ENCODE measurements at regions of chr19 and their contacts with region 1.

Region 1: GRCh38 chr19:52570000-52570861 is at the start of gene ZNF701:
- DNase-seq: peak; percentile 96
- ATAC-seq: peak; percentile 99
- H3K4me3 ChIP-seq: peak within 1 kb of the TSS; percentile 84 to 98 (median 98)
- H3K4me3 Mint-ChIP-seq: peak within 1 kb of the TSS; percentile 87
- H3K27ac ChIP-seq: peak within 1 kb of the TSS; percentile 77 to 87
- H3K27ac Mint-ChIP-seq: peak within 1 kb of the TSS; percentile 82
- H3K4me1 ChIP-seq: peaks cover 11 to 14% of the 10 kb centered on the region in 2 donors
- H3K4me1 Mint-ChIP-seq: peaks cover 33% of the 10 kb centered on the region
- H3K27me3 ChIP-seq: no peaks in the 10 kb centered on the region
- H3K27me3 Mint-ChIP-seq: no peaks in the 10 kb centered on the region
- CTCF ChIP-seq: peak; percentile 45
- total RNA-seq, gene ZNF701: 48.8 and 49.2 TPM in 2 replicates

Region 2: GRCh38 chr19:52535771-52536447 is 34.3 kb before region 1 on chr19:
- CTCF ChIA-PET with region 1: no interaction called
- POLR2A ChIA-PET with region 1: interaction called, 5 read pairs
- intact Hi-C with region 1: loop called (anchors 1 kb)
- DNase-seq: peak; percentile 90
- ATAC-seq: peak; percentile 99
- H3K4me3 ChIP-seq: peak overlapping the region; percentile 71 to 86 (median 76)
- H3K4me3 Mint-ChIP-seq: peak overlapping the region; percentile 95
- H3K27ac ChIP-seq: peak overlapping the region; percentile 45 to 77
- H3K27ac Mint-ChIP-seq: peak overlapping the region; percentile 90
- H3K4me1 ChIP-seq: peaks cover 2 to 18% of the 10 kb centered on the region in 2 donors
- H3K4me1 Mint-ChIP-seq: peaks cover 31% of the 10 kb centered on the region
- H3K27me3 ChIP-seq: no peaks in the 10 kb centered on the region
- H3K27me3 Mint-ChIP-seq: no peaks in the 10 kb centered on the region
- CTCF ChIP-seq: peak; percentile 29

Region 3: GRCh38 chr19:52601025-52601973 is 31.1 kb after region 1 on chr19:
- CTCF ChIA-PET with region 1: no interaction called
- POLR2A ChIA-PET with region 1: interaction called, 4 read pairs
- intact Hi-C with region 1: loop called (anchors 1 kb)
- DNase-seq: peak; percentile 92
- ATAC-seq: peak; percentile 99
- H3K4me3 ChIP-seq: peak overlapping the region; percentile 59 to 89 (median 82)
- H3K4me3 Mint-ChIP-seq: peak overlapping the region; percentile 90
- H3K27ac ChIP-seq: peak overlapping the region; percentile 43 to 62
- H3K27ac Mint-ChIP-seq: peak overlapping the region; percentile 87
- H3K4me1 ChIP-seq: peaks cover 11 to 16% of the 10 kb centered on the region in 2 donors
- H3K4me1 Mint-ChIP-seq: peaks cover 25% of the 10 kb centered on the region
- H3K27me3 ChIP-seq: no peaks in the 10 kb centered on the region
- H3K27me3 Mint-ChIP-seq: no peaks in the 10 kb centered on the region
- CTCF ChIP-seq: peak; percentile 61

Region 4: DNA sequence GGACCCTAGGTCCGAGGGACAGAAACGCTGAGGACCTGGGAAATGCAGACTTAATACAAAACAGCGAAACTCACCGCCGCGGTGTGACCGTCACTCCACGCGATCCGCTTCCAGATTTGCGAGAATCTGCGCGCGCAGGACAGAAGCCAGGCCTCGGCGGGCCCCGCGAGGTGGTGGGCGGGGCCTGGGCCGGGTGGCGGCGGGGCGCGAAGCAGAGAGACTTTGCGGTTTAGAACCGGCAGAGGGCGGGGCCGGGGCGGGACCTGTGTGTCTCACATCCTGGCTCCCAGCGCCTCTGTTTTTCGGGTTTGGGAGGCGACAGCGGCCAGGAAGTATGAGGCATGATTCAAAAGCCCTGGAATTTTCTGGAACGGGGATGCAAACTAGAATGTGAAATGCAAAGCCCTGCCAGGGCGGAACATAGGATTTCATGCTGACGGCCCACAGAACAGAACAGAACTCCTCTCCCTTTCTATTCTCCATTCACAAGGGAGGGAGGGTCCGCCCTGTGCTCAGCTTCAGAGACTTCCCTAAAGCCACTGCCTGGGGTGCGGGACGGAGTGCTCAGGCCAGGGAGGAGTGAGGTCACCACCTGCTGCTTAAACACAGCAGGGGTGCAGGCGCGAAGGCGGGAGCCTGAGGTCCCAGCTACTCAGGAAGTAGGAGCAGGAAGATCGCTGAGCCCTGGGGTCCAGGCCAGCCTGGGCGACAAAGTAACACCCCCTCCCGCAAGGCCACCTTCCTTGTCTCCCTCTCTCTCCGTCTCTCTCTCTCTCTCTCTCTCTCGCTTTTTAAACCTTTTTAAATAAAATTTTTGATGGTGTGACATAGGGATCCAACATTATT is 120.4 kb after region 1 on chr19:
- CTCF ChIA-PET with region 1: no interaction called
- POLR2A ChIA-PET with region 1: no interaction called
- intact Hi-C with region 1: loop called (anchors 1 kb)
- DNase-seq: peak; percentile 92
- ATAC-seq: peak; percentile 97
- H3K4me3 ChIP-seq: peak overlapping the region; percentile 76 to 91 (median 80)
- H3K4me3 Mint-ChIP-seq: peak overlapping the region; percentile 97
- H3K27ac ChIP-seq: peak overlapping the region; percentile 55 to 72
- H3K27ac Mint-ChIP-seq: peak overlapping the region; percentile 87
- H3K4me1 ChIP-seq: peaks cover 12 to 15% of the 10 kb centered on the region in 2 donors
- H3K4me1 Mint-ChIP-seq: peaks cover 26% of the 10 kb centered on the region
- H3K27me3 ChIP-seq: no peaks in the 10 kb centered on the region
- H3K27me3 Mint-ChIP-seq: no peaks in the 10 kb centered on the region
- CTCF ChIP-seq: no peak

Region 5: GRCh38 chr19:52786457-52787359 is 216.5 kb after region 1 on chr19 and contains the start of gene ZNF600:
- CTCF ChIA-PET with region 1: no interaction called
- POLR2A ChIA-PET with region 1: no interaction called
- intact Hi-C with region 1: loop called (anchors 1 kb)
- DNase-seq: peak; percentile 83
- ATAC-seq: peak; percentile 99
- H3K4me3 ChIP-seq: peak within 1 kb of the TSS; percentile 63 to 96 (median 78)
- H3K4me3 Mint-ChIP-seq: peak within 1 kb of the TSS; percentile 97
- H3K27ac ChIP-seq: peak within 1 kb of the TSS; percentile 40 to 69
- H3K27ac Mint-ChIP-seq: peak within 1 kb of the TSS; percentile 92
- H3K4me1 ChIP-seq: peaks cover 4 to 18% of the 10 kb centered on the region in 2 donors
- H3K4me1 Mint-ChIP-seq: peaks cover 31% of the 10 kb centered on the region
- H3K27me3 ChIP-seq: no peaks in the 10 kb centered on the region
- H3K27me3 Mint-ChIP-seq: no peaks in the 10 kb centered on the region
- CTCF ChIP-seq: peak; percentile 21
- total RNA-seq, gene ZNF600: 41.7 and 51.6 TPM in 2 replicates

Region 6: GRCh38 chr19:53333463-53334449 is 763.5 kb after region 1 on chr19 and contains the start of gene ZNF845:
- CTCF ChIA-PET with region 1: no interaction called
- POLR2A ChIA-PET with region 1: no interaction called
- intact Hi-C with region 1: loop called (anchors 1 kb)
- DNase-seq: peak; percentile 95
- ATAC-seq: peak; percentile 100
- H3K4me3 ChIP-seq: peak within 1 kb of the TSS; percentile 94 to 99 (median 96)
- H3K4me3 Mint-ChIP-seq: peak within 1 kb of the TSS; percentile 96
- H3K27ac ChIP-seq: peak within 1 kb of the TSS; percentile 60 to 81
- H3K27ac Mint-ChIP-seq: peak within 1 kb of the TSS; percentile 95
- H3K4me1 ChIP-seq: peaks cover 10 to 21% of the 10 kb centered on the region in 2 donors
- H3K4me1 Mint-ChIP-seq: peaks cover 22% of the 10 kb centered on the region
- H3K27me3 ChIP-seq: peaks cover 0 to 3% (median 0%) of the 10 kb centered on the region in 4 experiments
- H3K27me3 Mint-ChIP-seq: peaks cover 11% of the 10 kb centered on the region
- CTCF ChIP-seq: no peak
- total RNA-seq, gene ZNF845: 16.9 and 17.4 TPM in 2 replicates

Measured in B cell (primary cell).